Activated T-helper 2 cell treated with anti-CD3 and anti-CD28 coated beads, Interferon-gamma antibody, Interleukin-2, Interleukin-4, amounts not matched to agents 10 μg/mL and 5 μg/mL and 100 μg/mL, durations not matched to agents 14 hours and 24 hours and 36 hours (primary cell): ENCODE measurements at regions of chr10 and their contacts with region 1.

Region 1: GRCh38 chr10:115706026-115706781 is 566.8 kb downstream of the GFRA1 start:
- DNase-seq: no peak
- H3K4me3 Mint-ChIP-seq: no peak overlapping the region
- H3K27ac Mint-ChIP-seq: no peak overlapping the region
- H3K4me1 Mint-ChIP-seq: no peaks in the 10 kb centered on the region
- H3K27me3 Mint-ChIP-seq: no peaks in the 10 kb centered on the region

Region 2: GRCh38 chr10:115761166-115761565 is 55.0 kb after region 1 on chr10:
- intact Hi-C with region 1: no loop called
- DNase-seq: no peak
- H3K4me3 Mint-ChIP-seq: no peak overlapping the region
- H3K27ac Mint-ChIP-seq: no peak overlapping the region
- H3K4me1 Mint-ChIP-seq: no peaks in the 10 kb centered on the region
- H3K27me3 Mint-ChIP-seq: no peaks in the 10 kb centered on the region

Region 3: DNA sequence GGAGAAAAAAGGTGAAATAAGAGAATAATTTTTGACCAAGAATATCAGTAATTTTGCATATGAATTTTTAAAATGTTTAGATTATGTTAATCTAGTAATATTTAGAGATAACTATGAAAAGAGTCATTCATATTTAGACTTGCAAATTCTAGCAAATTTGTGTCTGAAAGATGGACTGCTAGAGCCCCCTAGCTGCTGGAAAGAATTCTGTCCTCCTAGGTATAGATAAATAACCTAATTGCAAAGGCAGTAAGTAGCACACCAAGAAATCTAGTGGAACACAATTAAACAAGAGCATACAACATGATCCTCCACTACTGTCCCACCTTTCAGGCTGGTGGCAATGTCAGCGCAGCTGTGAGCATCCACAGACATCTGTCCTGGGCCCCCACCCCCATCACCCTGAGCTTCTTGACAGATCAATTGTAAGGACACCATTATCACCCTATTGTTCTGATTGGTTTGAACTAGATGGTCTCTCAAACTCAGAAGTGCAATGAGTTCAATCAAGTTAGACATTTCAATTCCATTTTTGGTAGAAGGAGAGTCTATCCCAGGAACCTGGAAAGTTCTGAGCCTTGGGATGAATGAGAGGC is 581.8 kb after region 1 on chr10:
- intact Hi-C with region 1: loop called (anchors 10 kb)
- DNase-seq: no peak
- H3K4me3 Mint-ChIP-seq: no peak overlapping the region
- H3K27ac Mint-ChIP-seq: no peak overlapping the region
- H3K4me1 Mint-ChIP-seq: peaks cover 2% of the 10 kb centered on the region
- H3K27me3 Mint-ChIP-seq: peaks cover 3% of the 10 kb centered on the region